ENCODE measurements at regions of chr1 and their contacts with region 1.

Region 1: GRCh38 chr1:110209715-110210603 is at the start of gene KCNC4:
- DNase-seq: peak; percentile 92
- H3K4me3 Mint-ChIP-seq: peak within 1 kb of the TSS; percentile 86
- H3K27ac Mint-ChIP-seq: peak within 1 kb of the TSS; percentile 85
- H3K4me1 Mint-ChIP-seq: peaks cover 49% of the 10 kb centered on the region
- H3K27me3 Mint-ChIP-seq: no peaks in the 10 kb centered on the region
- total RNA-seq, gene KCNC4: 9.7 TPM

Region 2: GRCh38 chr1:110176299-110176956 is 33.5 kb before region 1 on chr1:
- CTCF ChIA-PET with region 1: no interaction called
- intact Hi-C with region 1: no loop called
- DNase-seq: no peak
- H3K4me3 Mint-ChIP-seq: no peak overlapping the region
- H3K27ac Mint-ChIP-seq: no peak overlapping the region
- H3K4me1 Mint-ChIP-seq: no peaks in the 10 kb centered on the region
- H3K27me3 Mint-ChIP-seq: no peaks in the 10 kb centered on the region

Region 3: GRCh38 chr1:110196917-110197765 is 12.8 kb before region 1 on chr1:
- CTCF ChIA-PET with region 1: interaction called, 21 read pairs
- intact Hi-C with region 1: no loop called
- DNase-seq: peak; percentile 65
- H3K4me3 Mint-ChIP-seq: no peak overlapping the region
- H3K27ac Mint-ChIP-seq: no peak overlapping the region
- H3K4me1 Mint-ChIP-seq: no peaks in the 10 kb centered on the region
- H3K27me3 Mint-ChIP-seq: no peaks in the 10 kb centered on the region

Region 4: DNA sequence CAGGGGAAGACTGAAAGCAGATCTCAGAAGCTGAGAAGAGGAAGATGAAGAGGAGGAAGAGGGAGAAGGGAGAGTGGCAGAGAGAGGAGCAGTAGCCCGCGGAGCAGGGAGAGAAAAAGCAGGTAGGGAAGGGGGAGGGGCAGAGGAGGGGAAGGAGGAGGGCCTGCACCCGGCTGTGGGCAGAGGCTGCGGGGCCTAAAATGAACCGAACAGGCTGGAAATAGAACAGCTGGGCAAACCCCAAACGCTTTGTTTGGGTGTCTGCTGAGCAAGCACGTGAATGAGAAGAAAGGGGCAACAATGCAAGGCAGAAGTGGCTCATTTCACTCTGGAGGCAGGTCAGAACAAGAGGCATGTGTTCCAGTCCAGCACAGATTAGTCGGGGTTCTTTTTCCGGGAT is 33.6 kb after region 1 on chr1:
- CTCF ChIA-PET with region 1: interaction called, 24 read pairs
- intact Hi-C with region 1: no loop called
- DNase-seq: peak; percentile 78
- H3K4me3 Mint-ChIP-seq: no peak overlapping the region
- H3K27ac Mint-ChIP-seq: peak overlapping the region; percentile 16
- H3K4me1 Mint-ChIP-seq: peaks cover 24% of the 10 kb centered on the region
- H3K27me3 Mint-ChIP-seq: no peaks in the 10 kb centered on the region

Region 5: GRCh38 chr1:110292031-110292741 is 82.2 kb after region 1 on chr1:
- CTCF ChIA-PET with region 1: interaction called, 11 read pairs
- intact Hi-C with region 1: no loop called
- DNase-seq: no peak
- H3K4me3 Mint-ChIP-seq: no peak overlapping the region
- H3K27ac Mint-ChIP-seq: no peak overlapping the region
- H3K4me1 Mint-ChIP-seq: no peaks in the 10 kb centered on the region
- H3K27me3 Mint-ChIP-seq: no peaks in the 10 kb centered on the region

Region 6: GRCh38 chr1:110312188-110313121 is 102.5 kb after region 1 on chr1:
- CTCF ChIA-PET with region 1: interaction called, 644 read pairs
- intact Hi-C with region 1: loop called (anchors 1 kb)
- DNase-seq: peak; percentile 81
- H3K4me3 Mint-ChIP-seq: no peak overlapping the region
- H3K27ac Mint-ChIP-seq: no peak overlapping the region
- H3K4me1 Mint-ChIP-seq: no peaks in the 10 kb centered on the region
- H3K27me3 Mint-ChIP-seq: no peaks in the 10 kb centered on the region

Region 7: DNA sequence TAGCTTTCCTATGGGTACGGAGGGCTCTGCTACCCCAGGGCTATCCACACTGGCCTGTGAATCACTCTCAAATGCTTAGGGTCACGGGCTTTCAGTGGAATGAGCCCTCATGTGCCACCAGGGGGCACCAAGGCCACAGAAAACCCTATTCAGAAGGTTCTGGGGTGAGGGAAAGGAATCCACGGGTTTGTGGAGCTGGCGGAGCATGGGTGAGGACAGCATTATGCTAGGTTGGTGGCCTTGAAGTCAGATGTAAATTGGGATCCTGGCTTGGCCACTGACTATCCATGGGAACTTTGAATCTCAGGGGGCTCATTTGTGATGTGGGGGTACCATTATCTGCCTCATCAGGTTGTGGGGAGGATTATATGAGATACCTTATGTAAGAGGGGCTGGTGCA is 202.6 kb after region 1 on chr1:
- CTCF ChIA-PET with region 1: interaction called, 24 read pairs
- intact Hi-C with region 1: loop called (anchors 2 kb)
- DNase-seq: peak; percentile 70
- H3K4me3 Mint-ChIP-seq: no peak overlapping the region
- H3K27ac Mint-ChIP-seq: no peak overlapping the region
- H3K4me1 Mint-ChIP-seq: peaks cover 7% of the 10 kb centered on the region
- H3K27me3 Mint-ChIP-seq: no peaks in the 10 kb centered on the region

Region 8: DNA sequence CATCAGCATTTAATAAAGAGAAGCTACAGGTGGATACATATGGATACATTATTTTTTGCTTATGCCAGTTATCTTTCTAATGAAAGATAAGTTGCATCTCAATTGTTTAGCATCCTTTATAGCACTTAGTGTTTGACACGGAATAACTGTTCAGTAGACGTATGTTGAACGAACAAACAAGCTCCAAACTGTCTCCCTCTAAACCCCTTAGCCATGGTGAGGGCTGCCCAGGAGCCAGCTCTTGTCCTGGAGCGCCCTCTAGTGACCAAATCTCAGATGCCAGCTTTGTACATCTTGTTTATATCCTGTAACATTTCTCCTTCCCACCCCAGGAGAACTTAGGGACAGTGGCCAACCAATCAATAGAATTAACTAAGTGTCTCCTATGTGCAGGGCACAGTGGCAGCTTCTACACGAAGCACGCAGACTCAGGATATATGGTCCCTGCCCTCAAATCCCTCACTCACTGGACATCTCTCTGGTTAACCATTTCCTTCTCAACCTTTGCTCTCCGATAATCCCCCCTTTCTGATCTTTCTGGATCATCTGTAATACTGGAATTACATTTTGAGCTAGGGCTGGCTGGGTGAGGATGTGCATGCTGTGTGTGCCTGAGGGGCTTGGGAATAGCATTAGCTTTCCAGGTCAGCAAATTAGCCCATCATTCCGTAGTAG is 286.1 kb after region 1 on chr1:
- CTCF ChIA-PET with region 1: interaction called, 71 read pairs
- intact Hi-C with region 1: loop called (anchors 1 kb)
- DNase-seq: peak; percentile 91
- H3K4me3 Mint-ChIP-seq: no peak overlapping the region
- H3K27ac Mint-ChIP-seq: peak overlapping the region; percentile 1
- H3K4me1 Mint-ChIP-seq: no peaks in the 10 kb centered on the region
- H3K27me3 Mint-ChIP-seq: no peaks in the 10 kb centered on the region